ENCODE measurements at regions of chr7 and their contacts with region 1.

Region 1: GRCh38 chr7:87059525-87060287 is at the start of gene ELAPOR2:
- DNase-seq: peak; percentile 96 to 97 (median 97)
- ATAC-seq: peak; percentile 99
- H3K4me3 ChIP-seq: peak within 1 kb of the TSS; percentile 73
- H3K27ac ChIP-seq: peak within 1 kb of the TSS; percentile 79
- H3K4me1 ChIP-seq: peaks cover 9 to 31% of the 10 kb centered on the region in 2 experiments
- H3K27me3 ChIP-seq: no peaks in the 10 kb centered on the region
- CTCF ChIP-seq: peak; percentile 79 to 94 (median 91)
- EP300 ChIP-seq: no peak; the same call in 1 of the 2 replicates
- POLR2A ChIP-seq: peak; percentile 72
- RAD21 ChIP-seq: peak; percentile 87 to 92
- polyA plus RNA-seq, gene ELAPOR2: 9.2 to 17.3 TPM

Region 2: DNA sequence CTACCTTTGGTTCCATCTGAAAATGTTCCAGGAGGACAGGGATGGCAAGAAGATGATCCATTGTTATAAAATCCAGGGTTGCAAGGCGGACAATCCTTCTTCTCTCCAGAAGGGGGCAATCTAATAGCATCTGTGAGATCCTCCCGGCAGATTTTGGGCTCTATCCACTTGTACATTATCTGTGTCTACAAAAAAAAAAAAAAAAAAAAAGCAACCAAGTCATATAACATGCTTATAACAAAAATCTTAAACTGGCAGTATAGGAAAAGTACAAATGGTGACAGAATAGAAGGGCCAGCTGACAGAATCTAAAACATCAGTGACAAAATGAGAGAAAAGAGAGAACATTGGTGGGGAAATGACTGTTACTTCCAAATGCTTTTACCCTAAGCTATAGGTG is 133.0 kb before region 1 on chr7:
- CTCF ChIA-PET with region 1: interaction called, 6 read pairs
- POLR2A ChIA-PET with region 1: no interaction called
- in situ Hi-C with region 1: no loop called
- intact Hi-C with region 1: loop called (anchors 2 kb)
- DNase-seq: peak; percentile 61 to 73 (median 68)
- ATAC-seq: peak; percentile 87
- H3K4me3 ChIP-seq: no peak overlapping the region
- H3K27ac ChIP-seq: no peak overlapping the region
- H3K4me1 ChIP-seq: no peaks in the 10 kb centered on the region
- H3K27me3 ChIP-seq: no peaks in the 10 kb centered on the region
- CTCF ChIP-seq: peak; percentile 61 to 87 (median 77)
- EP300 ChIP-seq: no peak
- POLR2A ChIP-seq: no peak
- RAD21 ChIP-seq: peak; percentile 73 to 79

Region 3: DNA sequence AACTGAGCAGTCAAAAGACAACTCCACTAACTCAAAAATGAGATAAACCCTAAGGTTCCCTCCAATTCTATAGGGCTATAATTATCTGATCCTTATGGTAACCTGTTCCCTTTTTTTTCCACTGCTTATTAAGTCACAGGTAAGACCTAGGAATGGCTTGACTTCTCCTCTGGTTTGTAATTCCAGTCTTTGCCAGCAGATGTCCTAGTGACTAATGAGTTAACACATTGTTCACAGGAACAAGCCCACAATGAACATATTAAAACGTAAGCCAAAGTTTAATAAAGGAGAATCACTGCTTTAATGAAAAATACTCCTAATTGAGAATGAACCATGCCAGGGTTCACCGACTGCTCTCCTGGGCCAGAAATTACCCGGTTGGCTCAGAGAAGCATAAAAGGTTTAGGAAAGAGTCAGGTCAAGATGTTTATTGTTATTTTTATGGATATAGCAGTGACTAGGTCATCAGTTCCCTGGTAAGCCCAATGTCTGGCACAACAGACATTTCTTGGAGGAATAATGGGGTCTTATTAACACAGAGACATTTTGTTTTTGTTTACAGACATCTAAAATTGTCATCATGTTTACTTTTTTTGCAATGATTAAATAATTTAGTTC is 120.4 kb before region 1 on chr7:
- CTCF ChIA-PET with region 1: interaction called, 3 read pairs
- POLR2A ChIA-PET with region 1: no interaction called
- in situ Hi-C with region 1: loop called (anchors 5 kb)
- intact Hi-C with region 1: loop called (anchors 1 kb)
- DNase-seq: peak; percentile 33 to 82 (median 42)
- ATAC-seq: peak; percentile 87
- H3K4me3 ChIP-seq: no peak overlapping the region
- H3K27ac ChIP-seq: no peak overlapping the region
- H3K4me1 ChIP-seq: peaks cover 0 to 9% of the 10 kb centered on the region in 2 experiments; a peak in 2 of 5 replicates
- H3K27me3 ChIP-seq: no peaks in the 10 kb centered on the region
- CTCF ChIP-seq: peak; percentile 59 to 83 (median 78); a peak in 5 of 6 replicates
- EP300 ChIP-seq: no peak
- POLR2A ChIP-seq: no peak
- RAD21 ChIP-seq: peak; percentile 87 to 88

Region 4: GRCh38 chr7:87107949-87108776 is 48.5 kb after region 1 on chr7:
- CTCF ChIA-PET with region 1: no interaction called
- POLR2A ChIA-PET with region 1: no interaction called
- in situ Hi-C with region 1: no loop called
- intact Hi-C with region 1: loop called (anchors 2 kb)
- DNase-seq: peak in 2 of 4 experiments; percentile 33 to 67
- ATAC-seq: peak; percentile 76
- H3K4me3 ChIP-seq: no peak overlapping the region
- H3K27ac ChIP-seq: peak overlapping the region; percentile 48
- H3K4me1 ChIP-seq: peaks cover 16 to 45% of the 10 kb centered on the region in 2 experiments
- H3K27me3 ChIP-seq: no peaks in the 10 kb centered on the region
- CTCF ChIP-seq: no peak
- EP300 ChIP-seq: peak; percentile 4; the same call in 1 of the 2 replicates
- POLR2A ChIP-seq: no peak
- RAD21 ChIP-seq: no peak

Region 5: GRCh38 chr7:87144173-87144657 is 84.5 kb after region 1 on chr7:
- CTCF ChIA-PET with region 1: interaction called, 26 read pairs
- POLR2A ChIA-PET with region 1: interaction called, 3 read pairs
- in situ Hi-C with region 1: no loop called
- intact Hi-C with region 1: loop called (anchors 1 kb)
- DNase-seq: no peak
- ATAC-seq: no peak
- H3K4me3 ChIP-seq: no peak overlapping the region
- H3K27ac ChIP-seq: peak overlapping the region; percentile 19; the same call in 2 of the 3 replicates
- H3K4me1 ChIP-seq: peaks cover 18 to 43% of the 10 kb centered on the region in 2 experiments
- H3K27me3 ChIP-seq: no peaks in the 10 kb centered on the region
- CTCF ChIP-seq: no peak
- EP300 ChIP-seq: no peak
- POLR2A ChIP-seq: no peak
- RAD21 ChIP-seq: peak; percentile 11 to 16; a peak in 1 of 4 replicates